K562 (cell line): ENCODE measurements at regions of chr18 and their contacts with region 1.

Region 1: GRCh38 chr18:31819106-31819924 is 58.6 kb upstream of the SLC25A52 start:
- DNase-seq: peak; percentile 15 to 73 (median 20)
- ATAC-seq: peak; percentile 86
- H3K4me3 ChIP-seq: no peak overlapping the region
- H3K27ac ChIP-seq: no peak overlapping the region
- H3K4me1 ChIP-seq: peaks cover 0 to 5% of the 10 kb centered on the region in 2 experiments; a peak in 3 of 5 replicates
- H3K27me3 ChIP-seq: no peaks in the 10 kb centered on the region
- CTCF ChIP-seq: peak; percentile 59 to 84 (median 72); a peak in 5 of 6 replicates
- EP300 ChIP-seq: no peak
- POLR2A ChIP-seq: no peak
- RAD21 ChIP-seq: peak; percentile 67 to 95

Region 2: DNA sequence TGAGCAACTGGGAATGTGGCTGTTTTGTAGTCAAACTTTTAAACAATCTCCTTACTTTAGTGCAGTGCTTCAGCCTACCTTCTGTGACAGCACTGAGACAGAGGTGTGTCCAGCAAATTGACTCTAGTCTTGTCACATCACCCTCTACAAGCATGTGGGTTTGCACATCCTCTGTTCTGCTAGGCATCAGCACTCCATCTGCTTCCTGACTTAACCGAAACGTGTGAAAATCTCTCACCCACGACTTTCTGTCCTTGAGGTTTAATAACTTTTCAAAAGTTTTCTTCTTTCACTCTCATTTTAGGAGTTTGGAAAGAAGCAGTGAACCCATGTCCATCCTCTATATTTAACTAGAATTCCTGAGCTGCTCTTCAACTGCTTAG is 185.0 kb before region 1 on chr18:
- CTCF ChIA-PET with region 1: no interaction called
- POLR2A ChIA-PET with region 1: no interaction called
- in situ Hi-C with region 1: no loop called
- intact Hi-C with region 1: loop called (anchors 10 kb)
- DNase-seq: no peak
- ATAC-seq: peak; percentile 53
- H3K4me3 ChIP-seq: no peak overlapping the region
- H3K27ac ChIP-seq: no peak overlapping the region
- H3K4me1 ChIP-seq: no peaks in the 10 kb centered on the region; a peak in 2 of 5 replicates
- H3K27me3 ChIP-seq: peaks cover 0 to 6% of the 10 kb centered on the region in 2 experiments; a peak in 1 of 5 replicates
- CTCF ChIP-seq: no peak
- EP300 ChIP-seq: no peak
- POLR2A ChIP-seq: no peak
- RAD21 ChIP-seq: no peak

Region 3: GRCh38 chr18:31741097-31741735 is 78.1 kb before region 1 on chr18:
- CTCF ChIA-PET with region 1: interaction called, 9 read pairs
- POLR2A ChIA-PET with region 1: no interaction called
- in situ Hi-C with region 1: no loop called
- intact Hi-C with region 1: loop called (anchors 1 kb)
- DNase-seq: peak; percentile 31 to 66 (median 33)
- ATAC-seq: peak; percentile 70
- H3K4me3 ChIP-seq: no peak overlapping the region
- H3K27ac ChIP-seq: no peak overlapping the region
- H3K4me1 ChIP-seq: peaks cover 0 to 7% of the 10 kb centered on the region in 2 experiments; a peak in 2 of 5 replicates
- H3K27me3 ChIP-seq: peaks cover under 1 to 8% of the 10 kb centered on the region in 2 experiments; a peak in 3 of 5 replicates
- CTCF ChIP-seq: peak; percentile 46 to 85 (median 82)
- EP300 ChIP-seq: no peak
- POLR2A ChIP-seq: no peak
- RAD21 ChIP-seq: peak; percentile 62 to 82

Region 4: DNA sequence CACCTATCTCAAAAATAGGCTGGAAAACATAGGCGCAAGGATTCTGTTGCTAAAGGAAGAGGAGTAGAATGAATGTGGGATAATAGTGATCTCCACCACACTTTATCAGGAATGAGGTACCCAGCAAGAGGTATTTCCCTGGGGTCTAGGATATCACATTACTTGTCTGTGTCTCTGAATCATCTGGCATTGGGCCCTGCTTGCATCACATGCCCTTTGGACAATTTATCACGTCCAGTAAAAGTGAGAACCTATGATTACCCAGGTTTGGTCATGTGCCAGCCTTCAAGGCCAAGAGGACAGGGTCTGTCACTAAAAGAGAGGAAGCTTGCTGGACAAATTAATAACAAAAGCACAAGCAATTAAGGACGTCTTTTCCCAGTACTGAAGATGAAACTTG is 135.0 kb after region 1 on chr18:
- CTCF ChIA-PET with region 1: no interaction called
- POLR2A ChIA-PET with region 1: no interaction called
- in situ Hi-C with region 1: no loop called
- intact Hi-C with region 1: loop called (anchors 2 kb)
- DNase-seq: no peak
- ATAC-seq: no peak
- H3K4me3 ChIP-seq: no peak overlapping the region
- H3K27ac ChIP-seq: no peak overlapping the region
- H3K4me1 ChIP-seq: 0 out of 5 replicates have a peak, but pooled peaks cover 0 to 4% of the 10 kb centered on the region in 2 experiments
- H3K27me3 ChIP-seq: no peaks in the 10 kb centered on the region
- CTCF ChIP-seq: no peak
- EP300 ChIP-seq: no peak
- POLR2A ChIP-seq: no peak
- RAD21 ChIP-seq: no peak

Region 5: DNA sequence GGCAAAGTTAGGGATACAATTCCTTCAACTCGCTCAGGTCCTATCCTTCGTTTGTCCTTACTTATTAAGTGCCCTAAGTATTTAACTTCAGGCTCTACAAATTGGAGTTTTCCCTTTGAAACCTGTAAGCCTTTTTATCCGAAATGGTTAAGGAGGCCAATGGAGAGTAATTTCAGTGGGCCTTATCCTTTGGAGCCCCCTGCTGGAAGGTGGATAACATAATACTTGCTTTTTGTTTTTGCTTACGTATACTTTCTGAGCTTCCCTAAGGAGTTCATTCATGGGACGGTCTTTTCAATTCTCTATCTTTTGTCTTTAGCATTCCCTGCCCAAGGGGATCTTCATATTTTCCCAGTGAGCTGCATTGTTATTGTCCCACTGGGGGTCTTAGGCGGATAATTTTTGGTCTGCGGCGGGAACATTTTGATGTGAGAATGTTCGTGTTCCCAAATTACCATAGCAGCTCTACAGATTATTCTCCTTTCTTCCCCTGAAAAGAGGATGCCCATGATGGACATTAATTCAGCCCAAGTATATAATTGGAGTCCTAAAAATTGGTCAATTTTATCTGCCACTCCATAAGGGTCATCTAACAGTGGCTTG is 158.1 kb after region 1 on chr18:
- CTCF ChIA-PET with region 1: no interaction called
- POLR2A ChIA-PET with region 1: no interaction called
- in situ Hi-C with region 1: no loop called
- intact Hi-C with region 1: loop called (anchors 5 kb)
- DNase-seq: peak; percentile 60 to 76 (median 61)
- ATAC-seq: peak; percentile 95
- H3K4me3 ChIP-seq: no peak overlapping the region
- H3K27ac ChIP-seq: no peak overlapping the region
- H3K4me1 ChIP-seq: no peaks in the 10 kb centered on the region
- H3K27me3 ChIP-seq: peaks cover 0 to 4% of the 10 kb centered on the region in 2 experiments; a peak in 1 of 5 replicates
- CTCF ChIP-seq: peak; percentile 63 to 93 (median 77); a peak in 5 of 6 replicates
- EP300 ChIP-seq: no peak
- POLR2A ChIP-seq: no peak
- RAD21 ChIP-seq: peak; percentile 80 to 94

Region 6: GRCh38 chr18:33034945-33035344 is 1215.6 kb after region 1 on chr18:
- CTCF ChIA-PET with region 1: no interaction called
- POLR2A ChIA-PET with region 1: no interaction called
- in situ Hi-C with region 1: no loop called
- intact Hi-C with region 1: no loop called
- DNase-seq: no peak
- ATAC-seq: no peak
- H3K4me3 ChIP-seq: no peak overlapping the region
- H3K27ac ChIP-seq: no peak overlapping the region
- H3K4me1 ChIP-seq: no peaks in the 10 kb centered on the region
- H3K27me3 ChIP-seq: no peaks in the 10 kb centered on the region
- CTCF ChIP-seq: no peak
- EP300 ChIP-seq: no peak
- POLR2A ChIP-seq: no peak
- RAD21 ChIP-seq: no peak